Naive thymus-derived CD4-positive, alpha-beta T cell (primary cell): ENCODE measurements at regions of chr6 and their contacts with region 1.

Region 1: GRCh38 chr6:33851959-33852358 is 48.2 kb upstream of the MLN start:
- DNase-seq: peak in 7 of 9 donors; percentile 4 to 36 (median 24)
- ATAC-seq: no peak
- H3K4me3 ChIP-seq: no peak overlapping the region
- H3K4me3 Mint-ChIP-seq: no peak overlapping the region
- H3K27ac ChIP-seq: no peak overlapping the region
- H3K27ac Mint-ChIP-seq: no peak overlapping the region
- H3K4me1 ChIP-seq: peaks cover 17 to 18% of the 10 kb centered on the region in 2 donors
- H3K4me1 Mint-ChIP-seq: peaks cover 12 to 26% (median 20%) of the 10 kb centered on the region in 7 donors
- H3K27me3 ChIP-seq: no peaks in the 10 kb centered on the region
- H3K27me3 Mint-ChIP-seq: peaks cover 0 to 36% (median 14%) of the 10 kb centered on the region in 5 donors

Region 2: DNA sequence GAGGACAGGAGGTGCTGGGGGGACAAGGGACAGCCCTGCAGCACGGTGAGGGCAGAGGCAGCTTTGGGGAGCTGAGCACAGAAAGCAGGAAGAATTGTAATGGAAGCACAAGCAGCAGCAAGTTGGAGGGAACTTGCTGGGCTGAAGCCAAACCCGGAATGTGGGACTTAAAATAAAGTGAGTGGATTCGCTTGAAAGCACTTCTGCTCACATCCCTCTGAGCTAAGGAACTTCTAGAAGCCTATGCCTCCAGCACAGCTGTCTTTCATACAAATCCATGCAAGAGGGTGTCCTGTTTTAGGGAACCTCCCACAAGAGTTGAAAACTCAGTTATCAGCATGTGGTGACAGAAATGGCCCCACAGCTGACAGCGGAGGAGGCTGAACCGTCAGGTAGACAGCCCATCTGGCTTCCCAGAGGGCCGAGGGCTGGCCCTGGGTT is 23.2 kb after region 1 on chr6:
- CTCF ChIA-PET with region 1: no interaction called
- POLR2A ChIA-PET with region 1: no interaction called
- intact Hi-C with region 1: no loop called
- DNase-seq: no peak
- ATAC-seq: no peak
- H3K4me3 ChIP-seq: no peak overlapping the region
- H3K4me3 Mint-ChIP-seq: peak overlapping the region in 3 of 10 donors; percentile 4 to 35 (median 17)
- H3K27ac ChIP-seq: no peak overlapping the region
- H3K27ac Mint-ChIP-seq: peak overlapping the region in 4 of 9 donors; percentile 26 to 87 (median 56)
- H3K4me1 ChIP-seq: no peaks in the 10 kb centered on the region
- H3K4me1 Mint-ChIP-seq: peaks cover 8 to 27% (median 13%) of the 10 kb centered on the region in 7 donors
- H3K27me3 ChIP-seq: no peaks in the 10 kb centered on the region
- H3K27me3 Mint-ChIP-seq: peaks cover 0 to 19% (median 0%) of the 10 kb centered on the region in 5 donors

Region 3: DNA sequence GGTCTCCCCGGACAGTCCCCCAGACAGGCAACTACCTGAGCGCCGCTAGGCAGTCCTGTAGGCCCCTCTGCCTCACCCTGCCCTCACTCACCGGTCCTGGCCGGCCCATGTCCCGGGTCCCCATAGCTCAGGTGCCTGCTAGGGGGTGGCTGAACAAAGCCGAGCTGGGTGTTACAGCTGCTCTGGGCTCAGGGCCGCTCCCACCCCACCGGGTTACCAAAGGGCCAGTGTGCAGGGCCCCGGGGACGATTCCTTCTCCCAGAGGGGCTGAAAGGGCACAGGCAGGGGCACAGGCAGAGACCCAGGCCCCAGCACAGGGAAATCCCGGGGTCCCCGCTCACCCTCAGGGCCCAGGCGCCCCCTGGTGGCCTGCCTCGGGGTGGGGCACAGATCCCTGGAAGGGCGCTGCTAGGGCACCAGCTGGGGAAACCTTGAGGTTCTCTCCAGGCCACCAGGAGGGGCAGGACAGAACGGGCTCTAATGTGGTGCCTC is 175.5 kb after region 1 on chr6:
- CTCF ChIA-PET with region 1: interaction called, 10 read pairs
- POLR2A ChIA-PET with region 1: no interaction called
- intact Hi-C with region 1: loop called in 1 of 2 experiments (anchors 2 kb)
- DNase-seq: peak; percentile 36 to 78 (median 64)
- ATAC-seq: peak; percentile 66
- H3K4me3 ChIP-seq: no peak overlapping the region
- H3K4me3 Mint-ChIP-seq: no peak overlapping the region
- H3K27ac ChIP-seq: no peak overlapping the region
- H3K27ac Mint-ChIP-seq: no peak overlapping the region
- H3K4me1 ChIP-seq: no peaks in the 10 kb centered on the region
- H3K4me1 Mint-ChIP-seq: peaks cover 0 to 4% (median 0%) of the 10 kb centered on the region in 7 donors
- H3K27me3 ChIP-seq: no peaks in the 10 kb centered on the region
- H3K27me3 Mint-ChIP-seq: peaks cover 0 to 4% (median 0%) of the 10 kb centered on the region in 5 donors